ENCODE measurements at regions of chr3 and their contacts with region 1.

Region 1: GRCh38 chr3:49802719-49803464 is at the start of gene INKA1:
- DNase-seq: peak; percentile 87
- H3K4me3 Mint-ChIP-seq: peak within 1 kb of the TSS; percentile 78
- H3K27ac Mint-ChIP-seq: peak within 1 kb of the TSS; percentile 71
- H3K4me1 Mint-ChIP-seq: peaks cover 24% of the 10 kb centered on the region
- H3K27me3 Mint-ChIP-seq: peaks cover 10% of the 10 kb centered on the region
- CTCF ChIP-seq: peak; percentile 74
- total RNA-seq, gene INKA1: 4.8 and 7.4 TPM in 2 replicates

Region 2: DNA sequence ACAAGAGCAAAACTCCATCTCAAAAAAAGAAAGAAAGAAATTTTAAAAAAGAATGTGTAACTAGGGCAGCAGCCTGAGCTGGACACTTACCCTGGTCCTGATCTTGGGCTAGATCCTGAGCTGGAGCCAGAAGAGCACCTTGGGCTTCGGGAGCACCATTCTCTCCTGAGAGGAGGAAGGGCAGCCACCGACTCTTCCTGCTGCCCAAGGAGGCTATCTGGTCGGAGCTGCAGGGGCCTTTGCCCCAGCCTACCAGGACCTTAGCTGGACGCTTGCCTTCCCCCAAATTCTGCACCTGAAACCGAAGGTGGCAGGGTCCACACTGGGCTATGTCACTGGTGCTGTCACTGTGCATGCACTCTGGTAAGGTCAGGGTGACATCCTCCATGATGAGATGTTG is 73.7 kb after region 1 on chr3:
- CTCF ChIA-PET with region 1: interaction called, 12 read pairs
- POLR2A ChIA-PET with region 1: interaction called, 5 read pairs
- intact Hi-C with region 1: no loop called
- DNase-seq: no peak
- H3K4me3 Mint-ChIP-seq: no peak overlapping the region
- H3K27ac Mint-ChIP-seq: no peak overlapping the region
- H3K4me1 Mint-ChIP-seq: no peaks in the 10 kb centered on the region
- H3K27me3 Mint-ChIP-seq: no peaks in the 10 kb centered on the region
- CTCF ChIP-seq: no peak

Region 3: GRCh38 chr3:49906004-49906743 is 103.3 kb after region 1 on chr3:
- CTCF ChIA-PET with region 1: interaction called, 57 read pairs
- POLR2A ChIA-PET with region 1: interaction called, 21 read pairs
- intact Hi-C with region 1: loop called (anchors 1 kb)
- DNase-seq: peak; percentile 72
- H3K4me3 Mint-ChIP-seq: peak overlapping the region; percentile 59
- H3K27ac Mint-ChIP-seq: peak overlapping the region; percentile 59
- H3K4me1 Mint-ChIP-seq: peaks cover 15% of the 10 kb centered on the region
- H3K27me3 Mint-ChIP-seq: no peaks in the 10 kb centered on the region
- CTCF ChIP-seq: peak; percentile 70

Region 4: DNA sequence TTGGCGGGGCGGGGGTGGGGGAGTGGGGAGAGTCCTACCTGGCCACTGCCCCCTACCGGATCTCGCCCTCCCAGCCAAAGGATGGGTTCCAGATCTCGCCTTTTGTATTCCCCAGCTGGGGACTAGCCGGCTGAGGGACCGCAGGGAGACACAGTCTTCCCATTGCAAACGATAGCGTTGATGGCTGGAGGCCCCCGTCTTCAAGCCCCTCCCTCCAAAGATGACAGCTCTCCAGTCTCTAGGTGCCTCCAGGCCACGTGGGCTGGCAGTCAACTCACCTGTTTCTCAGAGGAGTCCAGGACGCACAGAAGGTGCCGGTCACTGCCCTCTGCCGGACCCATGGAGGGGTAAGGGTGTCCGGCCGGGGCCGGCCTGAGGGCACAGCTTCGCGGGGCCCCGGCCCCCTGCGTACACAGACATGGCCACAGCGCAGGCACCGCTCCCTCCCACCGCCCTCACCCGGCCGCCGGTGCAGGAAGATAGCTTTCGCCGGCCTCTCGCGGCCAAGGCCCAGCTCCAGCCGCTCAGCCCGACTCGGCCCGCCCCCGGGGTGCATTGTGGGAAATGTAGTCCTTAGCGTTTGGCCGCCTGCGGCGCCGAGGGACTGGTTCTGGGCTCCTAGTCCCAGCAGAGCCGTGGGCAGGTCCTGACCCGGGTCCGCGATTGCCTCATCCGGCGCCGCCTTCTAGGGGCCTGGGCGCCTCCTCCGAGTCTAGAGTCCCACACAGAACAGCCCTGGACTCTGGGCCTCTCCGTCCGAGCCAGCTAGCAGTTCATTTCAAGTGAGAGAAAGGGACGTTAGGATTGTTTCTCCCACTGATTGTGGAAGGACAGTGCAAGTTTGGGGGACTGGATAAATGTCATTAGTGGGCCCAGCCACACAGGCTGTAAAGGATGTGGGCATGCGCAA is 126.7 kb after region 1 on chr3 and contains the start of gene MON1A:
- CTCF ChIA-PET with region 1: interaction called, 15 read pairs
- POLR2A ChIA-PET with region 1: interaction called, 12 read pairs
- intact Hi-C with region 1: no loop called
- DNase-seq: peak; percentile 95
- H3K4me3 Mint-ChIP-seq: peak within 1 kb of the TSS; percentile 87
- H3K27ac Mint-ChIP-seq: peak within 1 kb of the TSS; percentile 75
- H3K4me1 Mint-ChIP-seq: peaks cover 12% of the 10 kb centered on the region
- H3K27me3 Mint-ChIP-seq: no peaks in the 10 kb centered on the region
- CTCF ChIP-seq: peak; percentile 40
- total RNA-seq, gene MON1A: 9.6 and 18.6 TPM in 2 replicates

Region 5: GRCh38 chr3:50290124-50290641 is 487.3 kb after region 1 on chr3:
- CTCF ChIA-PET with region 1: no interaction called
- POLR2A ChIA-PET with region 1: no interaction called
- intact Hi-C with region 1: no loop called
- DNase-seq: no peak
- H3K4me3 Mint-ChIP-seq: peak overlapping the region; percentile 16
- H3K27ac Mint-ChIP-seq: no peak overlapping the region
- H3K4me1 Mint-ChIP-seq: peaks cover 14% of the 10 kb centered on the region
- H3K27me3 Mint-ChIP-seq: no peaks in the 10 kb centered on the region
- CTCF ChIP-seq: no peak

Measured in MCF 10A (cell line).